Ovary (tissue), 10 donors: ENCODE measurements at regions of chr3 and their contacts with region 1.

Region 1: DNA sequence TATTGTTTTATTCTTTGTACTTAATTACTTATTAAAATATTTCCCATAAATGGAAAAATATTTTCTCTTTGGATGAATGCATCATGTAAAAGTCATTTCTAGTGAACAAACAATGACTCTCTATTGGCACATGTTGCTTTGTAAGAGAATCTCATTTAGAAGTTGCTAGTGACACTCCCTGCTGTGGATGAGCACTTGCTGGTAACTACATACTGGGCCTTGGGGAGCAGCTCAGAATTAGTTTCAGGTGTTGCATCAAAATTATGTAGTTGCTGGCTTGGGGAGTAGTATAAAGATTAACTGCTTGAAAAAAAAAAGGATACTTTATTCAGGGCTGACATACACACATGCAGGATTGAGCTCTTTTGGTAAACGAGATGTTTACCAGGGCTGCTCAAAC is 80.3 kb upstream of the KCNAB1 start:
- DNase-seq: no peak
- H3K4me3 ChIP-seq: no peak overlapping the region
- H3K27ac ChIP-seq: no peak overlapping the region
- H3K4me1 ChIP-seq: no peaks in the 10 kb centered on the region
- H3K27me3 ChIP-seq: no peaks in the 10 kb centered on the region
- CTCF ChIP-seq: no peak
- EP300 ChIP-seq: no peak
- POLR2A ChIP-seq: no peak

Region 2: DNA sequence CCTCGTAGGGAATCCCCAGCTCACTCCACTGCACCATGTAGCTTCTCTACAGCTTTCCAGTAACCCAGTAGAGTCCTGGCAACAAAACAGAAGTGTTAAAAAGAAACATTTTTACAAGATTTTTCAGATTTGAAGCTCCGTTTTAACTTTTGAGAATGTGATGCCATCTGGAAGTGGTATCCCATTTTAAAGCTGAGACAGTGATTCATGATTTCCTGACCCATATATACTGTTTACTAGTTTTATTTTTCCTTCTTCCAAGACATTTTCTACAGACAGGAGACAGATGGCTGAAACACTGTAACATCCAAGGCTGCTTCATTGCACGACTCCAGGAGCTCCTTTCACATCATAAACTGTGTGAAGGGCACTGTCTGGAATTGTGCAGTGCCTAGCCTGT is 50.1 kb after region 1 on chr3:
- intact Hi-C with region 1: no loop called
- DNase-seq: no peak
- H3K4me3 ChIP-seq: no peak overlapping the region
- H3K27ac ChIP-seq: no peak overlapping the region
- H3K4me1 ChIP-seq: no peaks in the 10 kb centered on the region
- H3K27me3 ChIP-seq: no peaks in the 10 kb centered on the region
- CTCF ChIP-seq: no peak
- EP300 ChIP-seq: no peak
- POLR2A ChIP-seq: no peak

Region 3: GRCh38 chr3:156211583-156211982 is 171.5 kb after region 1 on chr3:
- intact Hi-C with region 1: no loop called
- DNase-seq: no peak
- H3K4me3 ChIP-seq: no peak overlapping the region
- H3K27ac ChIP-seq: no peak overlapping the region
- H3K4me1 ChIP-seq: peaks cover 3% of the 10 kb centered on the region
- H3K27me3 ChIP-seq: no peaks in the 10 kb centered on the region
- CTCF ChIP-seq: no peak
- EP300 ChIP-seq: no peak
- POLR2A ChIP-seq: no peak

Region 4: DNA sequence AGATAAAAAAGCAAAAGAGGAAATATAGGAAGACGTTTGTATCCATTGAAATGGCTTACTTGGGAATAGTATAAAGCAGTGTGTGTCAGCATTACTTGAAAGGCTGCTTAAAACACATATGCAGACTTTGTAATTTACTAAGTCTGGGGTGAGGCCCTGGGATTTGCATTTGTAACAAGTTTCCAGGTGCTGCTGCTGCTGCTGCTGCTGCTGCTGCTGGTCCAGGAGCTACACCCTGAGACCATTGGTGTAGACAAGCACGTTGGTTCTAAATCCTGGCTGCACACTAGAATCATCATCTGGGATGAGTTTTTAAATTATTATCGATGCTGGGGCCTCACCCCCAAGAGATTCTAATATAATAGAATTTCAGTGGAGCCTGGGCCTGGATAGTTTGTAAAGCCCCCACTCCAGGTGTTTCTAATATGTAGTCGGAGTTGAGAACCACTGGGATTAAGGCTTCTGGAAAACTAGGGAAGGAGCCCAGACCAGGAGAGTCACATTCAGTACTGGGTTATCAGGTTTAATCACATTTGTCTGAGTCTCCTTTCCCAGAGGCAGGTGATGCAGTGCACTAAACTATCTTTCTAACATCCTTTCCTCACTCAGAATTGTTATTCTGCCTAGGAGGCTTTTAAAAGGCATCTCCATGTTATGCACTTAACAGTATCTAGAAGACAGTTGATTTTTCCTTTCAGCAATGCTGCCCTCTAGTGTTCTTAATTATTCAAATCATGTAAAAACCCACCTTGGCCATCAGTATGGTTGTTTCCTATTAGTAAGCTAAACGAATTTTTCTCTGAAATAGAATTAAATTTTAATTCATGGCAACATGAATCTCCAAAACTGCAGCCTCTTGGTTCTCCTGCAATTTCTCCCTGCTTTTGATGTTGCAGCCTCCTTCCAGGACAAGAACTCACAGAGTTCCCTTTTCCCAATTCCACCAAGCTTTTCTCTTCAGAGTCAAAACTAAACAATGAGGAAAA is 469.4 kb after region 1 on chr3:
- intact Hi-C with region 1: loop called in 2 of 4 experiments (anchors 10 kb)
- DNase-seq: no peak
- H3K4me3 ChIP-seq: no peak overlapping the region
- H3K27ac ChIP-seq: no peak overlapping the region
- H3K4me1 ChIP-seq: no peaks in the 10 kb centered on the region
- H3K27me3 ChIP-seq: no peaks in the 10 kb centered on the region
- CTCF ChIP-seq: peak; percentile 26 to 66 (median 52)
- EP300 ChIP-seq: no peak
- POLR2A ChIP-seq: no peak